ENCODE measurements at regions of chr3 and their contacts with region 1.

Region 1: DNA sequence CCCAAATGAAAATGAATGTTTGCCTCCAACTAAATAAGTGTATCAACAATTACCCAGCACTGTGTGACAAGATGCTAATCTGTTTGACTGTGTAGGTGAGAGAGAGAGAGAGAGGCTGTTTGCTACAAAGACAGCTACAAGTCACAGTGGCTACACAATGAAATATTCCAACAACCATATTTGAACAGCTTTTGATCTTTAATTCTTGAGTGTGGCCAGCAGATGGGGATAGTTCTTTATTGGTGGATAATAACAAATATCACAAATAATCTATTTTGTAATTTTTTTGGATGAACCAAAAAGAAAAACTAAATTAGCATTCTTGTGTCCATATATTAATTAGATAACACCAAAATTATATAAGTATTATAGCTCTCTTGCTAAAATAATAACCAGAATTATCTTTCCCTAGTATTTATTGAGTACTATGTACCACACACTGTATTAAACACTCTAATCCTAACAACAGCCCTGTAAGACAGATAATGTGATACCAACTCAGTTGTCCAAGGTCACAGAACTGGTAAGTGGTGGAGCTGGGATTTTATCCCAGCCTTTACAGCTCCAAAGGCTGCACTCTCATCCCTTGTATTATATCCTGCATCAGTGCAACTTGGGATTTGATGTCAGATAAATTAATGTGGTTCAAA is 61.9 kb upstream of the C3orf80 start:
- DNase-seq: no peak
- H3K4me3 ChIP-seq: no peak overlapping the region
- CTCF ChIP-seq: no peak
- POLR2A ChIP-seq: no peak

Region 2: GRCh38 chr3:159950156-159950898 is 213.0 kb before region 1 on chr3:
- intact Hi-C with region 1: no loop called
- DNase-seq: no peak
- H3K4me3 ChIP-seq: no peak overlapping the region
- CTCF ChIP-seq: no peak
- POLR2A ChIP-seq: no peak

Region 3: GRCh38 chr3:160343132-160343531 is 179.8 kb after region 1 on chr3:
- intact Hi-C with region 1: loop called (anchors 10 kb)
- DNase-seq: no peak
- H3K4me3 ChIP-seq: no peak overlapping the region
- CTCF ChIP-seq: no peak
- POLR2A ChIP-seq: no peak

Region 4: GRCh38 chr3:160427832-160428424 is 264.6 kb after region 1 on chr3:
- intact Hi-C with region 1: loop called (anchors 10 kb)
- DNase-seq: no peak
- H3K4me3 ChIP-seq: no peak overlapping the region
- CTCF ChIP-seq: no peak
- POLR2A ChIP-seq: no peak

Measured in lower leg skin (tissue), 4 donors.